ENCODE measurements at regions of chr12 and their contacts with region 1.

Region 1: GRCh38 chr12:14443531-14443930 is 78.0 kb downstream of the ATF7IP start:
- DNase-seq: no peak
- ATAC-seq: no peak
- H3K4me3 Mint-ChIP-seq: no peak overlapping the region
- H3K27ac Mint-ChIP-seq: peak overlapping the region; percentile 57
- H3K4me1 Mint-ChIP-seq: peaks cover 18% of the 10 kb centered on the region
- H3K27me3 Mint-ChIP-seq: no peaks in the 10 kb centered on the region
- CTCF ChIP-seq: no peak

Region 2: GRCh38 chr12:14356147-14356546 is 87.4 kb before region 1 on chr12:
- CTCF ChIA-PET with region 1: no interaction called
- POLR2A ChIA-PET with region 1: no interaction called
- intact Hi-C with region 1: no loop called
- DNase-seq: no peak
- ATAC-seq: no peak
- H3K4me3 Mint-ChIP-seq: no peak overlapping the region
- H3K27ac Mint-ChIP-seq: no peak overlapping the region
- H3K4me1 Mint-ChIP-seq: peaks cover 10% of the 10 kb centered on the region
- H3K27me3 Mint-ChIP-seq: no peaks in the 10 kb centered on the region
- CTCF ChIP-seq: no peak

Region 3: DNA sequence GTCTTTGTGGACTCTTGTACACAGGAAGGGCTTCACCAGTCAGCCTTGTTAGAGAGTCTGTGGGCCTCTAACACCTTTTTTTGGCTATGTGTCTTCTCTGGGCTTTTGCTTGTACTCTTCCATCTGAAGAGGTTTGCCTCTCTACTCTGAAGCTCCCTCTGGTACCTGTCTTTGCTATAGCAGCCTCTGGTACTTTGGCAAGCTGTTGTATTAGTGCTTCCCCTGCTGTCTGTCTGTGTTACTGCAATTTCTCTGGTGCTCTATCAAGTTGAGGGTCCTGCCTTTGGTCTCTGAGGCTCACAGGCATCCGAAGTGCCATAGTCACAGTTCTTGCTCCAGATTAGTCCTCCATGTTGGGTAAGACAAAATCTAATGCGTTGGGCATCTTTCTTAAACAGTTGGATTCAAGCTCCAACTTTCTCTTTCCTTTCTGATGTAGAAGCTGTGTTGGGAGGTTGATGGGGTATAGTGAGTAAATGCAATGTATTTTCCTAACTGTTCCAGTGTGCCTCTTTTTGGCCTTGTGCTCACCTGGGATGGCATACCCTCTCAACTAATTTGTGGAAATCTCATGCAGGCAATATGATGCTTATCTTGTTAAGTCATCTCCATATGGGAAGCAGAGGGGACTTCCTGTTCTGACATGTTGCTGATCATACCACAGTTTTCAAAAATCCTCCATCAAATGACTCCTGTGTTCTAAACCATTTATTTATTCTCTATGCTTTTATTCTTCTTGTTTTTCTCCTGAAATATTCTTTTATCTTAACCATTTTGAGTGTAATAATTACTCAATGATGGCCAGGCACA is 10.8 kb after region 1 on chr12:
- CTCF ChIA-PET with region 1: interaction called, 3 read pairs
- POLR2A ChIA-PET with region 1: no interaction called
- intact Hi-C with region 1: loop called (anchors 2 kb)
- DNase-seq: no peak
- ATAC-seq: peak; percentile 97
- H3K4me3 Mint-ChIP-seq: no peak overlapping the region
- H3K27ac Mint-ChIP-seq: peak overlapping the region; percentile 74
- H3K4me1 Mint-ChIP-seq: peaks cover 41% of the 10 kb centered on the region
- H3K27me3 Mint-ChIP-seq: no peaks in the 10 kb centered on the region
- CTCF ChIP-seq: no peak

Measured in activated B cell treated with CpG ODN at 0.5 μM for 24 hours (primary cell).